ENCODE measurements at regions of chr6 and their contacts with region 1.

Region 1: DNA sequence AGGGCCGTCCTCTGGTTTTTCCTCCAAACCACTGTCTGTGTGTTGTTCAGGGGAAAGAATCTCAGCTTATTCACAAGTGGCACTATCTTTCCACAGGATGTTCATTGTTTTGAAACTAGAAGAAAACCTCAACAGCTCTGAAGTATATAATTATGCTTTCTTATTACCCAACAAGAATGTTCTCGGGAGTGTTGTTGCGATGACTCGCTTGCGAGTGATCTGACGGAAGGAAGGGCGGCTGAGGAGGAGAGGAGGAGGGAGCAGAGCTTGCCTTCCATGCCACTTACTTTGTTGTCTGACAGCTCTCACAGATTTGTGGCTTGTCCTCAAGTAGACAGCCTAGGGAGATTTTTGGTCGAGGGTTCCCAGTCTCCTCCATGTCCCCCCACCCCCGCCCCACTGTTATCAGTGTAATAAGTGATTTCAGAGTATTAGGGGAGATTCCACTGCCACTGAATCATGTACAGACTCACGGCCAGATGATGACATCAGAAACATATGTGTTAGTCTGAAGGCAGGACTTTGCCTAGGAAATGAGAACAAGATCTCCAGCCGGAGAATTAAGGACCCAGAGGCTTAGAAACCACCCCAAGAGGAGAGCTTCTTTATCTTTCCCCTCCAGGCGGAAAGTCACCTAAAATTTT is 80.7 kb upstream of the CCN6 start:
- DNase-seq: peak; percentile 84
- H3K4me3 Mint-ChIP-seq: peak overlapping the region; percentile 70
- H3K27ac Mint-ChIP-seq: peak overlapping the region; percentile 96
- H3K4me1 Mint-ChIP-seq: peaks cover 70% of the 10 kb centered on the region
- H3K27me3 Mint-ChIP-seq: no peaks in the 10 kb centered on the region

Region 2: DNA sequence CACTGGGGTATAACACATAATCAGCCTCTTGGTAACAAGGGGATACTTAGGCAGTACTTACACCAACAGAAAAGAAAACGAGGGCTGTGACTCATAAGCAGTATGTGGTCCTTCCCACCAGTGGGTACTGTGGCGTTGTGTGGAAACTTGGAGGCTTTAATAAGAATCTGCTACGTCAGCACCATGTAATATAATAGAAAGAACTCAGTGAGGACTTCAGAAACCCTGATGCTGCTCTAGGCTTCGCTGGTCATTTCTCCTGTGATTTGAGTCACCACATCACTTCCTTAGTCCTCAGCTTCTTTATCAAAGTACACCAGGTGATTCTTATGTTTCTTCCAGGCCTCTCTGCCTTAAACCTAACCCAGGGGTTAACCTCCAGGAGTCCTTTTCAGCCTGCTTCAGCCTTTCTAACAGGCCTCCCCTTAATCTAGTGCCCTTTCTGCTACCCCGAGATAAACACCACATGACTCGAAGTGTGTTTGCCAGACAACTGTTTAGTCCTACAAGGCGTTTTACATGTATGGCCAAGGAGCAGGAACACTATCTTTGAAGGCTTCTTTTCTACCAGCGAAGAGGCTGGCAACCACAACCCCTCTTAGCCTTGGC is 168.5 kb before region 1 on chr6:
- CTCF ChIA-PET with region 1: interaction called, 3 read pairs
- intact Hi-C with region 1: loop called (anchors 2 kb)
- DNase-seq: peak; percentile 74
- H3K4me3 Mint-ChIP-seq: peak overlapping the region; percentile 5
- H3K27ac Mint-ChIP-seq: peak overlapping the region; percentile 92
- H3K4me1 Mint-ChIP-seq: peaks cover 92% of the 10 kb centered on the region
- H3K27me3 Mint-ChIP-seq: no peaks in the 10 kb centered on the region

Region 3: GRCh38 chr6:111812060-111813038 is 160.9 kb before region 1 on chr6:
- CTCF ChIA-PET with region 1: interaction called, 3 read pairs
- intact Hi-C with region 1: loop called (anchors 1 kb)
- DNase-seq: no peak
- H3K4me3 Mint-ChIP-seq: no peak overlapping the region
- H3K27ac Mint-ChIP-seq: peak overlapping the region; percentile 93
- H3K4me1 Mint-ChIP-seq: peaks cover 82% of the 10 kb centered on the region
- H3K27me3 Mint-ChIP-seq: no peaks in the 10 kb centered on the region

Region 4: GRCh38 chr6:111985202-111985731 is 12.0 kb after region 1 on chr6:
- CTCF ChIA-PET with region 1: interaction called, 27 read pairs
- intact Hi-C with region 1: loop called (anchors 1 kb)
- DNase-seq: peak; percentile 76
- H3K4me3 Mint-ChIP-seq: peak overlapping the region; percentile 9
- H3K27ac Mint-ChIP-seq: peak overlapping the region; percentile 94
- H3K4me1 Mint-ChIP-seq: peaks cover 87% of the 10 kb centered on the region
- H3K27me3 Mint-ChIP-seq: no peaks in the 10 kb centered on the region

Region 5: DNA sequence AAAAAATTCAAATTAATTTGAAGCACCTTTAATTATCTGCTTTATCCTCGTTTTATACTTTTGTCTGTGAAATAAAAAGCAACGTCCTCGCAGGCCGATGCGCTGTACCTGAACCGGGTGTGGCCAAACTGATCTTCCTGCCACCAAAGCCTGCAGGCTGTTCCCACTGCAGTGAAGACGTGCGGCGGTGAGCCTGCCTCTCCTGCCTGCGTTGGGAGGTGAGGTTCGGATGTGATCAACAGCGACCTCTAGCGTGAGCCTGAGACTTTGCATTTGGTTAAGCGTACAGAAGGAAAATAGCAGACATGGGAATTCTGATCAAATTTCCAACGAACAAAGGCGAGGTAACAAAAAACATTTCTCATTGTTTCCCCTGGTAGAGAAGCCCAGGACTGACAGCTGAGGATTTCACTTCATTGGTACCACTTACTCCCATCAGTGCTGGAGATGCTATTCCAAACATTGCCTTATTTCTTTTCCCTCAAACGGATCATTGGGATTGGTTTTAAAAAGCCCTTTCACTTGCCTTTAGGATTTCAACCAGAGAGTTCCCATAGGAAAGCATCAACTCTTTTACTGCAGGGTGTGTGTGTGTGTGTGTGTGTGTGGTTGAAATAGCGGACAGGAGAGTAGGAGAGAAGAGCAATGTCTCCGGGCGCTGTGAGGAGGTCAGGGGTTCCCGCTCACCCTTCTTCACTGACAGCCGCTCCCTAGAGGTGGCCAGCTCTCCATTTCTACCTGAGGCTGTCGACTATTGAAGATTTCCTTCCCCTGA is 24.0 kb after region 1 on chr6:
- CTCF ChIA-PET with region 1: interaction called, 27 read pairs
- intact Hi-C with region 1: loop called (anchors 1 kb)
- DNase-seq: peak; percentile 89
- H3K4me3 Mint-ChIP-seq: peak overlapping the region; percentile 53
- H3K27ac Mint-ChIP-seq: peak overlapping the region; percentile 65
- H3K4me1 Mint-ChIP-seq: peaks cover 47% of the 10 kb centered on the region
- H3K27me3 Mint-ChIP-seq: no peaks in the 10 kb centered on the region

Region 6: GRCh38 chr6:112029045-112029822 is 56.0 kb after region 1 on chr6:
- CTCF ChIA-PET with region 1: interaction called, 12 read pairs
- intact Hi-C with region 1: loop called (anchors 2 kb)
- DNase-seq: peak; percentile 91
- H3K4me3 Mint-ChIP-seq: no peak overlapping the region
- H3K27ac Mint-ChIP-seq: peak overlapping the region; percentile 90
- H3K4me1 Mint-ChIP-seq: peaks cover 81% of the 10 kb centered on the region
- H3K27me3 Mint-ChIP-seq: no peaks in the 10 kb centered on the region

Region 7: GRCh38 chr6:112061605-112062004 is 88.4 kb after region 1 on chr6:
- CTCF ChIA-PET with region 1: no interaction called
- intact Hi-C with region 1: no loop called
- DNase-seq: no peak
- H3K4me3 Mint-ChIP-seq: no peak overlapping the region
- H3K27ac Mint-ChIP-seq: no peak overlapping the region
- H3K4me1 Mint-ChIP-seq: no peaks in the 10 kb centered on the region
- H3K27me3 Mint-ChIP-seq: no peaks in the 10 kb centered on the region

Region 8: DNA sequence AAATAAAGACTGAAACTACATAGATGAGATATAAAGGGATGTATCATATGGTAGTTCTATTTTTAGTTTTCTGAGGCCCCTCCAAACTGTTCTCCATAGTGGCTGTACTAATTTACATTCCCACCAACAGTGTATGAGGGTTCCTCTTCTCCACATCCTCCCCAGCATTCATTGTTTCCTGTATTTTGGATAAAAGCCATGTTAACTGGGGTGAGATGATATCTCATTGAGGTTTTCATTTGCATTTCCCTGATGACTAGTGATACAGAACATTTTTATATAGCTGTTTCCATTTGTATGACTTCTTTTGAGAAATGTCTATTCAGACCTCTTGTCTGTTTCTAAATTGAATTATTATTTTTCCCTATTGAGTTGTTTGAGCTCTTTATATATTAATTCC is 603.2 kb after region 1 on chr6:
- CTCF ChIA-PET with region 1: no interaction called
- intact Hi-C with region 1: no loop called
- DNase-seq: no peak
- H3K4me3 Mint-ChIP-seq: no peak overlapping the region
- H3K27ac Mint-ChIP-seq: no peak overlapping the region
- H3K4me1 Mint-ChIP-seq: no peaks in the 10 kb centered on the region
- H3K27me3 Mint-ChIP-seq: no peaks in the 10 kb centered on the region

Measured in activated naive CD4-positive, alpha-beta T cell treated with anti-CD3 and anti-CD28 coated beads for 36 hours (primary cell).